ENCODE measurements at regions of chr14 and their contacts with region 1.

Region 1: GRCh38 chr14:63276492-63277342 is 42.0 kb downstream of the GPHB5 start:
- DNase-seq: no peak
- H3K4me3 Mint-ChIP-seq: no peak overlapping the region
- H3K27ac Mint-ChIP-seq: no peak overlapping the region
- H3K4me1 Mint-ChIP-seq: no peaks in the 10 kb centered on the region
- H3K27me3 Mint-ChIP-seq: peaks cover 2% of the 10 kb centered on the region

Region 2: DNA sequence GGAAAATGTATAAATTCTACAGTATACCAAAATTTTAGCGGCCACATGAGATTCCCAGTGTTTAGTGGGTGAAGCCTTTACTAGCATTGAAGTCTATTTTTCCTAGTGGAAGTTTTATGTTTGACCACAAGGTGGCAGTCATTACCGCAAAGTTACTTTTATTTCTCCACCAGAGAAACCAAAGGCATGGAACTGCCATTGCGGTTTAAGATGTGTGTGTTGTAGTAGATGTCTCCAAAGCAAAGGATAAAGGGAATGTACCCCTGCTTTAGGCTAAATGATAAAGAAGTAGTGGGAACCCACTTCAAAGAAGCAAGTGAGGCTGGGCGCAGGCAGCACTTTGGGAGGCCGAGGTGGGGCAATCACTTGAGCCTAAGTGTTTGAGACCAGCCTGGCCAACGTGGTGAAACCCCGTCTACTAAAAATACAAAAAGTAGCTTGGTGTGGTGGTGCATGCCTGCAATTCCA is 1814.9 kb before region 1 on chr14:
- CTCF ChIA-PET with region 1: no interaction called
- intact Hi-C with region 1: loop called (anchors 10 kb)
- DNase-seq: peak; percentile 60
- H3K4me3 Mint-ChIP-seq: peak overlapping the region; percentile 27
- H3K27ac Mint-ChIP-seq: peak overlapping the region; percentile 93
- H3K4me1 Mint-ChIP-seq: peaks cover 71% of the 10 kb centered on the region
- H3K27me3 Mint-ChIP-seq: no peaks in the 10 kb centered on the region

Region 3: GRCh38 chr14:61894452-61895077 is 1382.2 kb before region 1 on chr14:
- CTCF ChIA-PET with region 1: no interaction called
- intact Hi-C with region 1: loop called (anchors 10 kb)
- DNase-seq: peak; percentile 82
- H3K4me3 Mint-ChIP-seq: no peak overlapping the region
- H3K27ac Mint-ChIP-seq: no peak overlapping the region
- H3K4me1 Mint-ChIP-seq: peaks cover 14% of the 10 kb centered on the region
- H3K27me3 Mint-ChIP-seq: no peaks in the 10 kb centered on the region

Region 4: GRCh38 chr14:62162998-62163589 is 1113.6 kb before region 1 on chr14:
- CTCF ChIA-PET with region 1: interaction called, 3 read pairs
- intact Hi-C with region 1: loop called (anchors 1 kb)
- DNase-seq: peak; percentile 18
- H3K4me3 Mint-ChIP-seq: no peak overlapping the region
- H3K27ac Mint-ChIP-seq: no peak overlapping the region
- H3K4me1 Mint-ChIP-seq: no peaks in the 10 kb centered on the region
- H3K27me3 Mint-ChIP-seq: peaks cover 12% of the 10 kb centered on the region

Region 5: DNA sequence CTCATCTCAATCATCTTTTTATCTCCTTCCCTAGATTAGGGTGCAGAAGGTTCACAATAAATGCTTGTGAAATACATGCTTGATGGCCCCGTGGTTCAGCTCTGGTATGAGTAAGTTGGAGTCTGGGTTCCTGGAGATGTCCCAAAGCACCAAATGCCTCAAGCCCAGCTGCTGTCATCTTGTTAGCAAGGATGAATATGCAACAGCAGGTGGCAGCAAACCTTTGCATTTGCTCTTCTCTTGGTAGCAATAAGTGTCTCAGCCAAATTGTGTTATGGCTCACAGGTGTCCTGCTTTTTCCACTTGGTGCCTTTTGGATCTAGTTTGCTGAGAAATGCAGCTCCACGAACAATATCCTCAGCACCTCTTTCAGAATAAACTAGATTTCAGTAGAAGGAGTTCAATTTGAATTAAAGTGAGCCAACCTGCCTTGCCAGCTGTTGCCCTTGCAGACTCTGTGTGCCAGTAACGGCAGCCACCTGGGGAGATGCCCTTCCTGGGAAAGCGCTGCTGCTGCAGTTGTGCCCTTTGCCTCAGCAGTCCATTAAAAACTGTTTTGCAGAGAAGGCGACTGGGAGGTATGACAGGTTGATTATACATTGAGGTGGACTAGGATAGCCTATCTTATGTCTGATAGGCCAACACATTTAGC is 1097.2 kb before region 1 on chr14:
- CTCF ChIA-PET with region 1: interaction called, 4 read pairs
- intact Hi-C with region 1: loop called (anchors 1 kb)
- DNase-seq: peak; percentile 65
- H3K4me3 Mint-ChIP-seq: no peak overlapping the region
- H3K27ac Mint-ChIP-seq: no peak overlapping the region
- H3K4me1 Mint-ChIP-seq: no peaks in the 10 kb centered on the region
- H3K27me3 Mint-ChIP-seq: peaks cover 17% of the 10 kb centered on the region

Region 6: DNA sequence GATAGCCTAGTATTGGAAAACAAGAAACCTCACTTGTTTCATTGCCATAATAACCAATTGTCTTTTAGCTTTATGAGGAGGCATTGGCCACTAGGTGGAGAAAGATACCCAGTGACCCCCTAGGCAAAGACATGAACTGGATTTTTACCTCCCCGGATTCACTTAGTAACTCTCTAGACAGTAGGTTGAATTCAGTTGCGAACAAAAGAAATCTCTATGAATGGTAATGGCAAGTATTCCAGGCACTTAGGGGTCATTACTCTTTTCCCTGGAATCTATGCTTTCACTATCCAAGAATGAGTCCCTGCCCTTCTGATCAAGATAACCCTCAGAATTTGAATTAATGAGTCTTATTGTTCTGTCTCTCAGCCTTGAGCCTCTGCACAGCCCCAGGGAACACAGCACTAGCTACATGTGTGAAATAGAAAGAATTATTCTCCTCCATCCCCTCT is 101.9 kb before region 1 on chr14:
- CTCF ChIA-PET with region 1: interaction called, 5 read pairs
- intact Hi-C with region 1: loop called (anchors 1 kb)
- DNase-seq: peak; percentile 11
- H3K4me3 Mint-ChIP-seq: no peak overlapping the region
- H3K27ac Mint-ChIP-seq: no peak overlapping the region
- H3K4me1 Mint-ChIP-seq: no peaks in the 10 kb centered on the region
- H3K27me3 Mint-ChIP-seq: peaks cover 4% of the 10 kb centered on the region

Region 7: DNA sequence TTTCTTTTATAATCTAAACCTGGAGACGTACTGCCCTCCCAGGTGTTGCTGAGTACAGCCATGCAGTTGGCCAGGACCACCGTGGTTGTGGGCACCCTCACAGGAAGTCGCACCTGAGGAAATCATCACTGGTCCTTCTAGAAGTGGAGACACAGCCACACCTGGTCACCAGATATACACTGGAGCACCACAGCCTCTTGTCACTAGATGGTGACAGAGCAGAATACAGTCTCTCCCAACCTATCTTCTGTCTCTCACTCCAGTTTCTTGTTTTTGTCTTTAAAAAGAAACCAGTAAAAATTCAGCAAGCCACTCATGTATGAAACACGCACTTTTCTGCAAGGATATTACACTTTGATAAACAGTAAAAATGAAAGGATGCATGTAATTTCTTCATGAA is 85.1 kb after region 1 on chr14:
- CTCF ChIA-PET with region 1: no interaction called
- intact Hi-C with region 1: no loop called
- DNase-seq: no peak
- H3K4me3 Mint-ChIP-seq: no peak overlapping the region
- H3K27ac Mint-ChIP-seq: no peak overlapping the region
- H3K4me1 Mint-ChIP-seq: no peaks in the 10 kb centered on the region
- H3K27me3 Mint-ChIP-seq: peaks cover 5% of the 10 kb centered on the region

Region 8: GRCh38 chr14:63544591-63545299 is 268.0 kb after region 1 on chr14:
- CTCF ChIA-PET with region 1: no interaction called
- intact Hi-C with region 1: no loop called
- DNase-seq: no peak
- H3K4me3 Mint-ChIP-seq: peak overlapping the region; percentile 19
- H3K27ac Mint-ChIP-seq: no peak overlapping the region
- H3K4me1 Mint-ChIP-seq: peaks cover 25% of the 10 kb centered on the region
- H3K27me3 Mint-ChIP-seq: no peaks in the 10 kb centered on the region